ENCODE measurements at regions of chr16 and their contacts with region 1.

Region 1: DNA sequence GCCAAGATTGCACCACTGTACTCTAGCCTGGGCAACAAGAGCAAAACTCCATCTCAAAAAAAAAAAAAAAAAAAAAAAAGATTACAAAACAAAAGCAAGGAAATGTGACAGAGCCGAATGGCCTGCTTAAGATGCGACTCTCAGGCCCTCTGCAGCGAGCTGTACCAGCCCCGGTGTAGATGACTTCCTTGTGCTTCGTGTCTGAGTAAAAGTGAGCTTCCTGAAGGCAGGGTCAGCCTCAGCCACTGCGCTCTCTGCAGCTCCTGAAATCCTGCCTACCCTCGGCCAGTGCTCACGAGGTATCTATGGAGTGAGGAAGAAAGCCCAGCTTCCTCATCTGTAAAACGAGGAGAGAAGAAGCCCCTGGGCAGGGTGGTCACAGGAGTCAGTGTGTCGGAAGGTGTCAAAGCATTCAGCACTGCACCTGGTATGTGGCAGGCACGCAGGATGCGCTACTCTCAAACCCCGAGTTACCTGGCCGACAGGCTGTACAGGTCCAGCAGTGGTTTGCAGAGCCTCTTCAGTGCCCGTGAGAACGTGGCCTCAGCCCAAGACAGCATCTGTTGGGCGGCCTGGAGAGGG is 44.5 kb downstream of the RMI2 start:
- DNase-seq: no peak
- H3K4me3 ChIP-seq: no peak overlapping the region
- H3K27ac ChIP-seq: no peak overlapping the region
- H3K4me1 ChIP-seq: peaks cover 11% of the 10 kb centered on the region
- H3K27me3 ChIP-seq: no peaks in the 10 kb centered on the region
- CTCF ChIP-seq: no peak

Region 2: GRCh38 chr16:10942233-10943063 is 447.3 kb before region 1 on chr16 and contains the start of gene DEXI:
- CTCF ChIA-PET with region 1: no interaction called
- POLR2A ChIA-PET with region 1: interaction called, 31 read pairs
- intact Hi-C with region 1: no loop called
- DNase-seq: peak; percentile 95
- H3K4me3 ChIP-seq: peak within 1 kb of the TSS; percentile 72
- H3K27ac ChIP-seq: peak within 1 kb of the TSS; percentile 60
- H3K4me1 ChIP-seq: peaks cover 20% of the 10 kb centered on the region
- H3K27me3 ChIP-seq: no peaks in the 10 kb centered on the region
- CTCF ChIP-seq: no peak
- total RNA-seq, gene DEXI: 30.7 and 31.6 TPM in 2 replicates

Region 3: DNA sequence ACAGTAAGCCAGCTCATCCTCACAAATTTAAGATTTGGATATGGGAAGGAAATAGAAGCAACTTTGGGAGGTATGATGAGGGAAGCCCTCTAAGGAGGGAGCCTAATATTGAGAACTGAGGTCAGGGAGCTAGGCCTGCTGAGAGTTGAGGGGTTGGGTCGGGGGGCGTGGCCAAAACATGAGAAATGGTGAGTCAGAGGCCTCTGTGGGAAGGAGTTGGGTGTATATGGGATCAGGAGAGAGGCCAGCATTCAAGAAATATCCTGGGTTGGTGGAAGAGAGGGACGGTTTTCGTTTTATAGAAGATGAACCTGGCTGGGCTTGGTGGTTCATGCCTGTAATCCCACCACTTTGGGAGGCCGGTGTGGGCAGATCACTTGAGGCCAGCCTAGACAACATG is 396.9 kb before region 1 on chr16:
- CTCF ChIA-PET with region 1: no interaction called
- POLR2A ChIA-PET with region 1: no interaction called
- intact Hi-C with region 1: no loop called
- DNase-seq: peak; percentile 23
- H3K4me3 ChIP-seq: no peak overlapping the region
- H3K27ac ChIP-seq: no peak overlapping the region
- H3K4me1 ChIP-seq: no peaks in the 10 kb centered on the region
- H3K27me3 ChIP-seq: no peaks in the 10 kb centered on the region
- CTCF ChIP-seq: no peak